B cell (primary cell): ENCODE measurements at regions of chr6 and their contacts with region 1.

Region 1: GRCh38 chr6:18477301-18477941 is 90.3 kb downstream of the RNF144B start:
- DNase-seq: peak; percentile 61
- ATAC-seq: peak; percentile 66
- H3K4me3 ChIP-seq: no peak overlapping the region
- H3K4me3 Mint-ChIP-seq: peak overlapping the region; percentile 11
- H3K27ac ChIP-seq: peak overlapping the region in 1 of 2 donors; percentile 28
- H3K27ac Mint-ChIP-seq: peak overlapping the region; percentile 38
- H3K4me1 ChIP-seq: peaks cover 29 to 31% of the 10 kb centered on the region in 2 donors
- H3K4me1 Mint-ChIP-seq: peaks cover 33% of the 10 kb centered on the region
- H3K27me3 ChIP-seq: no peaks in the 10 kb centered on the region
- H3K27me3 Mint-ChIP-seq: no peaks in the 10 kb centered on the region
- CTCF ChIP-seq: no peak

Region 2: GRCh38 chr6:17519120-17519519 is 958.3 kb before region 1 on chr6:
- CTCF ChIA-PET with region 1: no interaction called
- POLR2A ChIA-PET with region 1: interaction called, 11 read pairs
- intact Hi-C with region 1: no loop called
- DNase-seq: no peak
- ATAC-seq: no peak
- H3K4me3 ChIP-seq: no peak overlapping the region
- H3K4me3 Mint-ChIP-seq: no peak overlapping the region
- H3K27ac ChIP-seq: no peak overlapping the region
- H3K27ac Mint-ChIP-seq: no peak overlapping the region
- H3K4me1 ChIP-seq: no peaks in the 10 kb centered on the region
- H3K4me1 Mint-ChIP-seq: no peaks in the 10 kb centered on the region
- H3K27me3 ChIP-seq: no peaks in the 10 kb centered on the region
- H3K27me3 Mint-ChIP-seq: no peaks in the 10 kb centered on the region
- CTCF ChIP-seq: no peak

Region 3: GRCh38 chr6:18400831-18401446 is 76.5 kb before region 1 on chr6:
- CTCF ChIA-PET with region 1: no interaction called
- POLR2A ChIA-PET with region 1: no interaction called
- intact Hi-C with region 1: loop called (anchors 10 kb)
- DNase-seq: peak; percentile 73
- ATAC-seq: peak; percentile 90
- H3K4me3 ChIP-seq: peak overlapping the region in 2 of 5 experiments; percentile 7 to 11
- H3K4me3 Mint-ChIP-seq: peak overlapping the region; percentile 70
- H3K27ac ChIP-seq: peak overlapping the region; percentile 54 to 84
- H3K27ac Mint-ChIP-seq: peak overlapping the region; percentile 90
- H3K4me1 ChIP-seq: peaks cover 23 to 39% of the 10 kb centered on the region in 2 donors
- H3K4me1 Mint-ChIP-seq: peaks cover 40% of the 10 kb centered on the region
- H3K27me3 ChIP-seq: no peaks in the 10 kb centered on the region
- H3K27me3 Mint-ChIP-seq: no peaks in the 10 kb centered on the region
- CTCF ChIP-seq: no peak

Region 4: DNA sequence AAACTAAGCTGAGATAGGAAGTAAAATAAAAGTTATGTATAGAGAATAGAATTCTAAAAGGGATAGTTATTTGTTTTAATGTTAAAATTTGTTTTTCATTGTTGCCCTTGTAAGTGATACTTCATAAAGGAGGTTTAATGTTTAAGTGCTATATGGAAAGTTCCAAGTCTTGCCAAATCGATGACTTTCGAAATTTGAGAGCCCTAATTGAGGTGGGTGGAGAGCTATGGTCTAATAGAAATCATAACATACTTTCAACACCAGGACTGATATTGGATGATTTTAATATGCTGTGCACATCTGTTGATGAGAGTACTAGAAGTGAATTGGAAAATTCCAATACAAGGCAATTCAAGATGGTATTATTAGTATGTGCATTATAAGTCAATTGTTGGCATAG is 25.7 kb before region 1 on chr6:
- CTCF ChIA-PET with region 1: no interaction called
- POLR2A ChIA-PET with region 1: no interaction called
- intact Hi-C with region 1: no loop called
- DNase-seq: no peak
- ATAC-seq: no peak
- H3K4me3 ChIP-seq: no peak overlapping the region
- H3K4me3 Mint-ChIP-seq: no peak overlapping the region
- H3K27ac ChIP-seq: no peak overlapping the region
- H3K27ac Mint-ChIP-seq: no peak overlapping the region
- H3K4me1 ChIP-seq: no peaks in the 10 kb centered on the region
- H3K4me1 Mint-ChIP-seq: peaks cover 9% of the 10 kb centered on the region
- H3K27me3 ChIP-seq: no peaks in the 10 kb centered on the region
- H3K27me3 Mint-ChIP-seq: no peaks in the 10 kb centered on the region
- CTCF ChIP-seq: no peak

Region 5: GRCh38 chr6:18488526-18489270 is 11.3 kb after region 1 on chr6:
- CTCF ChIA-PET with region 1: no interaction called
- POLR2A ChIA-PET with region 1: no interaction called
- intact Hi-C with region 1: no loop called
- DNase-seq: no peak
- ATAC-seq: no peak
- H3K4me3 ChIP-seq: no peak overlapping the region
- H3K4me3 Mint-ChIP-seq: no peak overlapping the region
- H3K27ac ChIP-seq: no peak overlapping the region
- H3K27ac Mint-ChIP-seq: no peak overlapping the region
- H3K4me1 ChIP-seq: no peaks in the 10 kb centered on the region
- H3K4me1 Mint-ChIP-seq: peaks cover 4% of the 10 kb centered on the region
- H3K27me3 ChIP-seq: peaks cover 0 to 3% (median 0%) of the 10 kb centered on the region in 4 experiments
- H3K27me3 Mint-ChIP-seq: no peaks in the 10 kb centered on the region
- CTCF ChIP-seq: no peak